Mammary epithelial cell (primary cell): ENCODE measurements at regions of chr1 and their contacts with region 1.

Region 1: DNA sequence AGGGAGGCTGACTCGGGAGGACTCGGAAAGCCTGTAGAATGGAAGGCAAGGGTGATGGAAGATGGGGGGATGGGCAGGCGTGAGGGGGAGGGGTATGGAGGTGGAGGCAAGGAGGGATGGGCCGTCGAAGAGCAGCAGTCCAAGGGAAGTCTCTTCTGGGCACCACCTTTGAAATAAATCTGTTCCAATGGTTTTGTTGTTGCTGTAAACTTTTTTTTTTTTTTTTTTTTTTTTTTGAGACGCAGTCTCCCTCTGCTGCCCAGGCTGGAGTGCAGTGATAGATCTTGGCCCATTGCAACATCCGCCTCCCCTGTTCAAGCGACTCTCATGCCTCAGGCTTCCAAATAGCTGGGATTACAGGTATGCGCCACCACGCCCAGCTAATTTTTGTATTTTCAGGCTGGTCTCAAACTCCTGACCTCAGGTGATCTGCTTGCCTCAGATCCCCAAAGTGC is 79.0 kb upstream of the SLC45A1 start:
- DNase-seq: peak; percentile 58
- H3K4me3 ChIP-seq: no peak overlapping the region
- H3K27ac ChIP-seq: no peak overlapping the region
- H3K4me1 ChIP-seq: peaks cover 15% of the 10 kb centered on the region
- H3K27me3 ChIP-seq: no peaks in the 10 kb centered on the region
- CTCF ChIP-seq: peak; percentile 26 to 61

Region 2: GRCh38 chr1:7975212-7975865 is 263.5 kb before region 1 on chr1:
- CTCF ChIA-PET with region 1: no interaction called
- dilution Hi-C with region 1: no loop called
- in situ Hi-C with region 1: no loop called
- intact Hi-C with region 1: loop called (anchors 1 kb)
- DNase-seq: peak; percentile 75
- H3K4me3 ChIP-seq: no peak overlapping the region
- H3K27ac ChIP-seq: no peak overlapping the region
- H3K4me1 ChIP-seq: no peaks in the 10 kb centered on the region
- H3K27me3 ChIP-seq: no peaks in the 10 kb centered on the region
- CTCF ChIP-seq: peak; percentile 96 to 98

Region 3: DNA sequence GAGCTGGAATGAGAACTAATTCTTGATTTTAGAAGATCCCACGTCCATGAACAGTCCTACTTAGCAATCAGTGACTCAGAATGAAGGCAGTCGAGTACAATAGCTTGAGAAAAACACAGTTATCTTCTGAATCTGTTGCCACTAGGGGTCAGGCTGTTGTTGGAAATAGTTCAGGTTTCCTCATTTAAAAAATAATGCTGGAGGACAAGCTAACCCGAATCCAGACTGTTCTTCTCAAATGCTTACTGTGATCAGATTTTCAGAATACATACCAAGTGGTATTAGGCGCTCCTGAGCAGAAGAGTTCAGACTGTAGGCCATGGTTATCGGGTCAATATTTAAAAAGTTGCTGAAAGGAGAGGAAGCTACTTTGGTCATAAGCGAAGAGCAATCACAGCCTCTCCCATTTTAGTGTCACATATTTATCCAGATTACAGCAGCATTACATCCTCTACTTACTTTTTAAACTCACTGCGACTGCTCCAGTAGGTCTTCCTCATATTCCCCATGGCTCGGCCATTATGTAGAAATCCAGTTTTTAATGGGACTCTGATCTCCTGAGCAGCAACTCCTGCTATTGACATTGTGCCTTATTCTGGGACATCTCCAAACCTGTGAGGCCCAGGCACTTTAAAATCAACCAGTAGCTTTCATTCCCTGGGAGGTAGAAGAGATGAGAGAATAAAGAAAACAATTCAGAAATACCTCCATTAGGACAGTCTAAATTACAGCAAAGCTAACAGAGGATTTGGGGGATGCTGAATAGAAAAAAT is 223.7 kb before region 1 on chr1:
- CTCF ChIA-PET with region 1: interaction called, 5 read pairs
- dilution Hi-C with region 1: no loop called
- in situ Hi-C with region 1: no loop called
- intact Hi-C with region 1: loop called (anchors 1 kb)
- DNase-seq: peak; percentile 78
- H3K4me3 ChIP-seq: no peak overlapping the region
- H3K27ac ChIP-seq: peak overlapping the region; percentile 30
- H3K4me1 ChIP-seq: peaks cover 58% of the 10 kb centered on the region
- H3K27me3 ChIP-seq: no peaks in the 10 kb centered on the region
- CTCF ChIP-seq: peak; percentile 60 to 67

Region 4: GRCh38 chr1:8116893-8117264 is 122.0 kb before region 1 on chr1:
- CTCF ChIA-PET with region 1: interaction called, 19 read pairs
- dilution Hi-C with region 1: no loop called
- in situ Hi-C with region 1: no loop called
- intact Hi-C with region 1: no loop called
- DNase-seq: no peak
- H3K4me3 ChIP-seq: no peak overlapping the region
- H3K27ac ChIP-seq: no peak overlapping the region
- H3K4me1 ChIP-seq: peaks cover 21% of the 10 kb centered on the region
- H3K27me3 ChIP-seq: no peaks in the 10 kb centered on the region
- CTCF ChIP-seq: no peak

Region 5: DNA sequence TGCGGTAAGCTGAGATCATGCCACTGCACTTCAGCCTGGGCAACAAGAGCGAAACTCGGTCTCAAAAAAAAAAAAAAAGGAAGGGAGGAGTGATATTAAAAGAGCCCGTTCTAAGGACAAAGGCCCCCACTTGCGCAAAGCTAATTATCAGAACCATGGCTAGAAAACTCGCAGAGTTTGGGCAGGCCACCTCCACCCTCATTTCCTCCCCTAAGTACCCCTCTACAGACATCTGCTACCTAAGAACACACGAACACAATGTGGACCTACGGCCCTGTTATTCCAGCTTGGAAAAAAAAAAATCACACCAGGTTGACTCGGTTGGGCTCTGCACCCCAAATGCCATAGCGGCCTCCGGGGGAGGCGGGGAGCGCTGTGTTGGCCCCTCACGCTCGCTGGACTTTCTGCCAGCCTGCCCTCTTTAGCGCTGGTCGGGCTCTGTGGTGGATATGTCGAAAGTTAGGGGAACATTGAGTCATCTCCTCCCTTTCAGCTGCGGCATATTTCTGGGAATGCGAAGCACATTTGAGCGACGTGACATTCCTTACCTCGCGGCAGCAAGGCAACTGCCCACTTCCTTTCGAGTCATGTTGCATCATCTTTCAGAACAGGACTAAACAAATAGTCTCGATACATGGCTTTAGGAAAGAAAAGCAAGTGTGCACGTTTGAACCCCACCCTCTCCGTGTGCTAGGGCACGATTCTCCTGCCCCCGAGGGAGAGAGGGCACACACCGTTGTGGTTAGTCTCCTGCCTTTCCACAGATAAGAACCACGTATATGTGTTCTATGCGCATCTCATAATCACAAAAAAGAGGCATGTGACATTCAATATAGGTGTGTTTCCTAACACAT is 27.1 kb before region 1 on chr1:
- CTCF ChIA-PET with region 1: no interaction called
- dilution Hi-C with region 1: no loop called
- in situ Hi-C with region 1: no loop called
- intact Hi-C with region 1: loop called (anchors 2 kb)
- DNase-seq: peak; percentile 98
- H3K4me3 ChIP-seq: no peak overlapping the region
- H3K27ac ChIP-seq: peak overlapping the region; percentile 86
- H3K4me1 ChIP-seq: peaks cover 25% of the 10 kb centered on the region
- H3K27me3 ChIP-seq: no peaks in the 10 kb centered on the region
- CTCF ChIP-seq: no peak